H1 (cell line): ENCODE measurements at regions of chr5 and their contacts with region 1.

Region 1: GRCh38 chr5:10489810-10490426 is 48.2 kb downstream of the ROPN1L start:
- DNase-seq: no peak
- H3K4me3 ChIP-seq: no peak overlapping the region
- H3K27ac ChIP-seq: no peak overlapping the region
- H3K4me1 ChIP-seq: peaks cover 0 to 5% (median 0%) of the 10 kb centered on the region in 4 experiments; a peak in 2 of 7 replicates
- H3K27me3 ChIP-seq: no peaks in the 10 kb centered on the region
- CTCF ChIP-seq: no peak
- EP300 ChIP-seq: no peak
- POLR2A ChIP-seq: no peak
- RAD21 ChIP-seq: no peak

Region 2: DNA sequence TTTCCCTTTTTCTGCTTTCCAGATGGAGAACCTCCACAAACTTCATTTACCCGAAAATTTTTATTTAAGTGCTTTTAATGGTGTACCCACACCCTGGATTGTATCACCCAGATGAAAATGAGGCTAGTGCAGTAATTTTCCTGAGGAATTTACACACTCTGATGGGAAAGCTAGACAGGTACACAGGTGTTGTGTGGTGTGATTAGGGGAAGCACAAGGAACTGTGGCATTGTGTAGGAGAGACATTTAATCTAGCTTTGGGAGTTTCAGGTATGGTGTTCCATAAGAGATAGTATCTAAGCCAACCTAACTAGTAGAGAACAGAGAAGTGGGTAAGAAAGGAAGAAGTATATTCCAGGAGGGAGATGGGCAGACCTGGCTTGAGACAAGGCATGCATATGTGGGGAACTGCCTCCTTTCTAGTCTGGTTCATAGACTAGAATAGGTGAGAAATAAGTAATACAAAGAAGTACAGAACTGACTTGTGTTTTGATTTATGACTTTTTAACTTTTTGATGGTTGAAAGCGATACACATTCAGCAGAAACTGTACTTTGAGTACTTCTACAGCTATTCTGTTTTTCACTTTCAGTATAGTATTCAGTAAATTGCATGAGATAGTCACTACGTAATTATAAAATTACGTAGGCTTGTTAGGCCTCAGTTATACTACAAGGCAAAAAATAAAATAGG is 71.1 kb before region 1 on chr5:
- CTCF ChIA-PET with region 1: no interaction called
- POLR2A ChIA-PET with region 1: no interaction called
- DNase-seq: no peak
- H3K4me3 ChIP-seq: no peak overlapping the region
- H3K27ac ChIP-seq: no peak overlapping the region
- H3K4me1 ChIP-seq: peaks cover 0 to 2% (median 0%) of the 10 kb centered on the region in 4 experiments; a peak in 1 of 7 replicates
- H3K27me3 ChIP-seq: no peaks in the 10 kb centered on the region
- CTCF ChIP-seq: no peak
- EP300 ChIP-seq: no peak
- POLR2A ChIP-seq: no peak
- RAD21 ChIP-seq: no peak

Region 3: GRCh38 chr5:10479226-10479721 is 10.6 kb before region 1 on chr5:
- CTCF ChIA-PET with region 1: interaction called, 11 read pairs
- POLR2A ChIA-PET with region 1: no interaction called
- DNase-seq: no peak
- H3K4me3 ChIP-seq: no peak overlapping the region
- H3K27ac ChIP-seq: no peak overlapping the region
- H3K4me1 ChIP-seq: peaks cover 5 to 12% (median 8%) of the 10 kb centered on the region in 4 experiments; a peak in 4 of 7 replicates
- H3K27me3 ChIP-seq: 0 out of 7 replicates have a peak, but pooled peaks cover 0 to 4% (median 0%) of the 10 kb centered on the region in 4 experiments
- CTCF ChIP-seq: no peak
- EP300 ChIP-seq: no peak
- POLR2A ChIP-seq: no peak
- RAD21 ChIP-seq: no peak

Region 4: DNA sequence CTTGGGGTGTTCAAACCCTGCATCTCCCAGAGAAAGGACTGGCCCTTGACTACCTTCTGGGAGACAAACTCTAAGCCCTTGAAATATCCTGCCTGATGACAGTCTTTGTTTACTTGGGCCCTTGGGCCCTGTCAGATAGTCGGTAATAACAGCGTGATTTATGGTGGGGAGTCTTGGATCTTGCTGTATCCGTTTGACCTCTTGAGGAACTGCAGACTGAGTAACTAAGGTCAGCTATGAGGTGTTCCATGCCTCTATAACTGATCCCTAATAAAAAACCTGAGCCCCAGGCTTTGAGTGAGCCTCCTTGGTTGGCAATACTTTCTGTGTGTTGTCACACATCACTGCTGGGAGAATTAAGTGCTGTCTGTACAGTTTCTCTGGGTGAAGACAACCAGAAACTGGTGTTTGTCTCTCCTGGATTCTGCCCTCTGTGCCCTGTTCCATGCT is 17.7 kb after region 1 on chr5:
- CTCF ChIA-PET with region 1: interaction called, 80 read pairs
- POLR2A ChIA-PET with region 1: no interaction called
- DNase-seq: no peak
- H3K4me3 ChIP-seq: no peak overlapping the region
- H3K27ac ChIP-seq: no peak overlapping the region
- H3K4me1 ChIP-seq: peaks cover 0 to under 1% (median 0%) of the 10 kb centered on the region in 4 experiments; a peak in 2 of 7 replicates
- H3K27me3 ChIP-seq: no peaks in the 10 kb centered on the region
- CTCF ChIP-seq: no peak
- EP300 ChIP-seq: no peak
- POLR2A ChIP-seq: no peak
- RAD21 ChIP-seq: no peak